ENCODE measurements at regions of chr7 and their contacts with region 1.

Region 1: GRCh38 chr7:36291387-36292316 is 98.0 kb upstream of the ANLN start:
- DNase-seq: peak; percentile 87 to 88
- ATAC-seq: peak; percentile 92 to 96 (median 94)
- H3K4me3 ChIP-seq: peak overlapping the region; percentile 12 to 49 (median 47)
- H3K27ac ChIP-seq: peak overlapping the region; percentile 21 to 92 (median 80)
- H3K4me1 ChIP-seq: peaks cover 0 to 52% (median 28%) of the 10 kb centered on the region in 9 donors
- H3K27me3 ChIP-seq: no peaks in the 10 kb centered on the region
- CTCF ChIP-seq: peak; percentile 96 to 99 (median 98)

Region 2: DNA sequence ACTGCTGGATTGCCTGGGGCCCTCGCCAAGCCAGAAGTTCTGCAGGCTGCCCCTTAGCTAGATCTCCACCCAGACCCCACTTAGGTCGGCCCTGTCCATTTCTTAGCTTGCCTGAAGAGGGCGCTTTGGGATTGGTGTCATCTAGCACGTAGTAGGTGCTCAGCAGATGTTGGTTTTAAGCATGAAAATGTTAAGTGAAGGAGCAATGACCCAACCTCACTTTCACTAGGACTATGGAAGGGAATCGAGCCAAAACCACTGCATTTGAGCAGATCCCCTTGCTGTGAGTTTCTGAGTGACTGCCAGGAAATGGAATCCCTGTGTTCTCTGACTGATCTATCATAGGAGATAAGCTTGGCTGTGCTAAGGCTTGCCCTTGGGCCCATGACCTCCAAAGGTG is 270.3 kb before region 1 on chr7:
- intact Hi-C with region 1: loop called in 1 of 10 experiments (anchors 1 kb)
- DNase-seq: no peak
- ATAC-seq: peak in 1 of 8 donors; percentile 42
- H3K4me3 ChIP-seq: no peak overlapping the region
- H3K27ac ChIP-seq: peak overlapping the region in 1 of 10 donors; percentile 18
- H3K4me1 ChIP-seq: peaks cover 0 to 25% (median 0%) of the 10 kb centered on the region in 9 donors
- H3K27me3 ChIP-seq: no peaks in the 10 kb centered on the region
- CTCF ChIP-seq: peak; percentile 9 to 57 (median 46)

Region 3: DNA sequence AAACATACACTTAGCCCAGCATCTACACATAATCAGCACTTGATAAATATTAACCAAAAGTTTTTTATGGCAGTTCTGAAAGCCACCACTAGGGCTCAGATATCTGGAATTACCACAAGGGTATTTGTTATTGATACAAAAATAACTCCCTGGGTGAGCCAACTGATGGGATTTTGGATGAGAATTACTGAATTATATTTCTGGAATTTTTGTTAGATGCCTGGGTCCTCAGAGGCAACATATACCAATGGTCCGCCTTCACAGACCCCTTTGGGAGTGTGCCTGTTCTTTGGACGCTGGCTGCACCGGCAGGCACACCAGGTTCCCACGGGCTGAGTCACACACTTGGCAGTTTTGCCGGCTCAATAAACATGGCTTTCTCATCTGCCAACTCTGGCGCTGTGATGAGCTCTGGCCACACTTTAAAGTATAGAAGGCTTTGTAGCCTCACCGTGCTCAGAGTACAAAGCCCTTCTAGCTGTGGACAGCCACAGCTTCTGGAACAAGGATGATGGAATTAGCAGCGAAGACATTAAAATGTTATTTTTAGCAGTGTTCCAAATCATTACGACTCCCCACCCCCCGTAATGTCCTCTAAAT is 163.1 kb before region 1 on chr7:
- intact Hi-C with region 1: loop called in 2 of 10 experiments (anchors 5 kb)
- DNase-seq: peak; percentile 75
- ATAC-seq: peak; percentile 86 to 96 (median 89)
- H3K4me3 ChIP-seq: peak overlapping the region in 5 of 10 donors; percentile 2 to 15 (median 8)
- H3K27ac ChIP-seq: peak overlapping the region; percentile 61 to 85 (median 72)
- H3K4me1 ChIP-seq: peaks cover 10 to 49% (median 25%) of the 10 kb centered on the region in 9 donors
- H3K27me3 ChIP-seq: no peaks in the 10 kb centered on the region
- CTCF ChIP-seq: peak; percentile 52 to 80 (median 69)

Region 4: DNA sequence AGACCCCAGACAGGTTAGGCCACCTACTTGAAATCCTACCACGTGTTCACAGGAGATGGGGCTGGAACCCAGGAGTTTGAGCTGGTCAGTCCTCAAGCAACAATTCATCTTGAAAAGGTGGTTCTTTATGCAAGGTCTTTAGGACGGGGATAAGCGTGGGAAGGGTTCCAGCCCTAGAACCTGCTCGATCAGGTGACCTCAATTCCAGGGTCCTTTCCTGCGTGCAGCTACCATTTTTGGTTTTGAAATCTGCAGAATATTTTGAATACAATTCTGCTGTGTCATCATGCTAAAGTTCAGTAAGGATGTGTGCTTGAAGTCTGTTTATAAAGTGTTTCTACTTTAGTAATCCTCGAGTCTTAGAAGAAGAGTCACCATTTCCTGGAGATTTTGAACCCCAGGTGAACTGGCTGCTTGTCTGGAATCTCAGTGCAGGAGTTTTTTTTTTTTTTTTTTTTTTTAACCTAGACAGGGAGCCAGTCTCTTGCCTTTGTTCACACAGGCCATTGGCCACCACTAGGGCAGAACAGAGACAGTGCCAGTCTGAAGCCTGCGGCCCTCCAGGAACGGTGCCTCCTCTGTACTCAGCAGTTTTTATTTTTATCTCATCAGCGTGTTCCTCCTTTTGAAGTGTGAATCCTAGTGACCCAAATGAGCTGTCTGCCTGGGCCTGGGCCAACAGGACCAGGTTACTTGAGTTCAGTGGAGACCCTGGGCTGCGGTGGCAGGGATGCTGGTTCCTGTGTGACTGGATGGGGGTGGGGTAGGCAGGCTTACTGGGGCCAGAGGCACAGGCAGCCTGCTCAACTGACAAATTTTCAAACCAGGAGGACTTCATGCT is 84.0 kb before region 1 on chr7:
- intact Hi-C with region 1: loop called in 3 of 10 experiments (anchors 5 to 10 kb)
- DNase-seq: peak; percentile 50 to 57
- ATAC-seq: peak; percentile 45 to 87 (median 78)
- H3K4me3 ChIP-seq: no peak overlapping the region
- H3K27ac ChIP-seq: peak overlapping the region in 3 of 10 donors; percentile 41 to 71 (median 44)
- H3K4me1 ChIP-seq: peaks cover 2 to 81% (median 65%) of the 10 kb centered on the region in 9 donors
- H3K27me3 ChIP-seq: no peaks in the 10 kb centered on the region
- CTCF ChIP-seq: peak in 3 of 9 donors; percentile 14 to 21 (median 20)

Region 5: GRCh38 chr7:36318116-36318515 is 26.5 kb after region 1 on chr7:
- intact Hi-C with region 1: loop called in 1 of 10 experiments (anchors 2 kb)
- DNase-seq: no peak
- ATAC-seq: no peak
- H3K4me3 ChIP-seq: no peak overlapping the region
- H3K27ac ChIP-seq: no peak overlapping the region
- H3K4me1 ChIP-seq: peaks cover 0 to 9% (median 0%) of the 10 kb centered on the region in 9 donors
- H3K27me3 ChIP-seq: no peaks in the 10 kb centered on the region
- CTCF ChIP-seq: no peak

Measured in heart right ventricle (tissue), 16 donors.